ENCODE measurements at regions of chr1 and their contacts with region 1.

Region 1: GRCh38 chr1:96370752-96371151 is 350.8 kb upstream of the PTBP2 start:
- DNase-seq: peak; percentile 93
- H3K4me3 ChIP-seq: no peak overlapping the region
- H3K27ac ChIP-seq: peak overlapping the region; percentile 83
- H3K4me1 ChIP-seq: peaks cover 33% of the 10 kb centered on the region
- H3K27me3 ChIP-seq: no peaks in the 10 kb centered on the region
- CTCF ChIP-seq: no peak
- POLR2A ChIP-seq: peak; percentile 21

Region 2: DNA sequence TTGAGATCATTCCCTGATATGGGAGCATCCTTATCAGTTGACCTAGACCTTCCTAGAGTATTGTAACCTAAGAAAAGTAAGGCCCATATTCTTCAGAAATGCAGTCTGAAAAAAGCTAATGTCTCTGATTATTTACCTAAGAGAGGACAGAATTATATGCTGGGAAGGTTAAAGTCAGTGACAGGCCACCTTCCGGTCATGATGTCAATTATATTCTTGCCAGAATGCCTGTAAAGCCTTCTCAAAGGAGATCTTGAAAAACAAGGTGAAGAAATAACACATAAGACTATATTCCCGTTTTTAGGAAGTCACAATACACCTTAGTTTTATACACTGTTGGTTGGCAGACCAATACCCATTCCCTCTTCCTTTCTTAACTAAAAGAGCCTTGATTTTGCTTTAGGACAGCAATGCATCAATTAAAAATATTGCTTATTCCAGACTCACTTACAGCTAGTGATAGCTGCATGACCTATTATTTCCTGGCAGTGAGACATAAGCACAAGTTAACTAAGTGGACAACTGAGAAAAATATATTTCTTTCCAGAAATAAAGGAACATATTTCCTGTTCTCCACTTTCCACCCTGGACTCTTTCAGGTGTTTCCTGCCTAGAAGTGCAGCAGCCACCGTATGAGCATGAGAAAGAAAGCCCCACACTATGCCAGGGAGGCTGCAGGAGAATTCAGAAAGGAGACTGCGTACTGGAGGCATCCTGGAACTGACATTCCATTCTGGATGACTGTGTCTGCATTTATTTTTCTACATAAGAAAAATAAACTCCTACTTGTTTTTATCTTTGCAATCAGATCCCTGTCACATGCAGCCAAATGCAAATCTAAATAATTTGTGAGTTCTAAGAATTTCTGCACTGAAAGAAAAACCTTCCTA is 17.9 kb after region 1 on chr1:
- CTCF ChIA-PET with region 1: interaction called, 4 read pairs
- POLR2A ChIA-PET with region 1: no interaction called
- dilution Hi-C with region 1: no loop called
- intact Hi-C with region 1: loop called (anchors 1 kb)
- DNase-seq: peak; percentile 98
- H3K4me3 ChIP-seq: no peak overlapping the region
- H3K27ac ChIP-seq: peak overlapping the region; percentile 93
- H3K4me1 ChIP-seq: peaks cover 22% of the 10 kb centered on the region
- H3K27me3 ChIP-seq: no peaks in the 10 kb centered on the region
- CTCF ChIP-seq: no peak
- POLR2A ChIP-seq: peak; percentile 36

Region 3: DNA sequence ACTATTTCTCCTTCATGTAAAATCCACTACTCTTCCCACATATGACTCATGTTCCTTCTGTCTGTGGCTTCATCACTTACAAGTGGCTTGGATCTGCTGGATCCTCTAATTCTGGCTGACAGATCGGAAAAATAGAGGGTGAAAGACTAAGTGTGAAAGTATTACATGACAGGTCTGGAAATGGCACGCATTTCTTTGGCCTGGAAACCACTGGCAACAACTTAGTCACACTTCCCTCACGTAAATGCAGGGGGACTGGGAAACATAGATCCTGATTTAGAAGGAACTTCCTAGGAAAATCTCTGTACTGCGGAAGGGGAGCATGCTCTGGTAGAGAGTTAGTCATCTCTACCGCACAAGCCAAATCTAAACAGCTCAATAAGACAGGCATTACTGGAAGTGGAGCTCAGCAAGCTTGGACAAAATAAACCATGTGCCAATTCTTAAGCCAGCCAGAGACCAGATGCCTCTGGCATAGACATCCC is 45.4 kb after region 1 on chr1:
- CTCF ChIA-PET with region 1: no interaction called
- POLR2A ChIA-PET with region 1: no interaction called
- dilution Hi-C with region 1: no loop called
- intact Hi-C with region 1: loop called (anchors 5 kb)
- DNase-seq: peak; percentile 93
- H3K4me3 ChIP-seq: no peak overlapping the region
- H3K27ac ChIP-seq: peak overlapping the region; percentile 69
- H3K4me1 ChIP-seq: peaks cover 4% of the 10 kb centered on the region
- H3K27me3 ChIP-seq: no peaks in the 10 kb centered on the region
- CTCF ChIP-seq: no peak
- POLR2A ChIP-seq: no peak

Region 4: GRCh38 chr1:96473791-96474434 is 103.2 kb after region 1 on chr1:
- CTCF ChIA-PET with region 1: no interaction called
- POLR2A ChIA-PET with region 1: no interaction called
- dilution Hi-C with region 1: no loop called
- intact Hi-C with region 1: no loop called
- DNase-seq: no peak
- H3K4me3 ChIP-seq: no peak overlapping the region
- H3K27ac ChIP-seq: no peak overlapping the region
- H3K4me1 ChIP-seq: no peaks in the 10 kb centered on the region
- H3K27me3 ChIP-seq: peaks cover 0 to 3% of the 10 kb centered on the region in 2 experiments
- CTCF ChIP-seq: no peak
- POLR2A ChIP-seq: no peak

Region 5: DNA sequence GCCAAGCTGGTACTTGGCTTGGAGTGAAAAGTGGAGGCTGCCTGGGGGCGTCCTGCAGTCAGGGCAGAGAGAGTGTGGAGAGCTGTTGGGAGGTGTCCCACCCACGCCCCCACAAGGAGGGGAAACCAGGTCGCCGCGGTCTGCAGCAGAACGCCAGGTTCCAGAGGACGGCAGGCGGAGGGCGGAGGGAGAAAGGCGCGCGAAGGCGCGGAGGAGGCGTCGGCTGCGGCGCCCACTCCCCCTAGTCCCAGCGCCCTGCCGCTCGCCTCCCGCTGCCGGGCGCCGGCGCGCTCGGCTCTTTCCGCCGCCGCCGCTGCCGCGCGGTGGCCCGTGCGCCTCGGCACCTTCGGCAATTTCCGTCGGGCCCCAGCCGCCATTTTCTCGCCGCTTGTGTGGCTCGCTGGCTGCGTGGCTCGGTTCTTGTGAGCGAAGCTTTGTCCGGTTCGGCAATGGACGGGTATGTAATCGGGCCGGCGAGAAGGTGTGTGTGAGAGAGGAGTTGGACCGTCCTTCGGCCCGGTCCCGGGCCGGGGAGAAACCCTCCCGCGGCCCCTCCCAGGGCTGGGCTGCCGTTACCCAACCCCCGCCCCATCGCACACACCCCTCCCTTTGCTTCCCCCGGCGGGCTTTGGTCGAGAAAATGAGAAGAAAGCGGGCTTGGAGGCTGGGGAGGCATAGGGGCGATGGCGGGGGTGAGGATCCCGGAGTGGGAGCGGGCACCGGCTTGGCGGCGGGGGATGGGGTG is 350.8 kb after region 1 on chr1 and contains the start of gene PTBP2:
- CTCF ChIA-PET with region 1: no interaction called
- POLR2A ChIA-PET with region 1: no interaction called
- dilution Hi-C with region 1: no loop called
- intact Hi-C with region 1: loop called (anchors 5 kb)
- DNase-seq: peak; percentile 84
- H3K4me3 ChIP-seq: peak within 1 kb of the TSS; percentile 52 to 99 (median 93)
- H3K27ac ChIP-seq: peak within 1 kb of the TSS; percentile 82
- H3K4me1 ChIP-seq: peaks cover 23% of the 10 kb centered on the region
- H3K27me3 ChIP-seq: no peaks in the 10 kb centered on the region
- CTCF ChIP-seq: no peak
- POLR2A ChIP-seq: no peak
- total RNA-seq, gene PTBP2: 21.3 and 27.0 TPM in 2 replicates

Region 6: GRCh38 chr1:96808191-96808590 is 437.4 kb after region 1 on chr1:
- CTCF ChIA-PET with region 1: no interaction called
- POLR2A ChIA-PET with region 1: no interaction called
- dilution Hi-C with region 1: no loop called
- intact Hi-C with region 1: loop called (anchors 10 kb)
- DNase-seq: peak; percentile 21
- H3K4me3 ChIP-seq: no peak overlapping the region
- H3K27ac ChIP-seq: no peak overlapping the region
- H3K4me1 ChIP-seq: peaks cover 16% of the 10 kb centered on the region
- H3K27me3 ChIP-seq: no peaks in the 10 kb centered on the region
- CTCF ChIP-seq: no peak
- POLR2A ChIP-seq: no peak

Measured in endothelial cell of umbilical vein (primary cell).